K562 (cell line): ENCODE measurements at regions of chr15 and their contacts with region 1.

Region 1: DNA sequence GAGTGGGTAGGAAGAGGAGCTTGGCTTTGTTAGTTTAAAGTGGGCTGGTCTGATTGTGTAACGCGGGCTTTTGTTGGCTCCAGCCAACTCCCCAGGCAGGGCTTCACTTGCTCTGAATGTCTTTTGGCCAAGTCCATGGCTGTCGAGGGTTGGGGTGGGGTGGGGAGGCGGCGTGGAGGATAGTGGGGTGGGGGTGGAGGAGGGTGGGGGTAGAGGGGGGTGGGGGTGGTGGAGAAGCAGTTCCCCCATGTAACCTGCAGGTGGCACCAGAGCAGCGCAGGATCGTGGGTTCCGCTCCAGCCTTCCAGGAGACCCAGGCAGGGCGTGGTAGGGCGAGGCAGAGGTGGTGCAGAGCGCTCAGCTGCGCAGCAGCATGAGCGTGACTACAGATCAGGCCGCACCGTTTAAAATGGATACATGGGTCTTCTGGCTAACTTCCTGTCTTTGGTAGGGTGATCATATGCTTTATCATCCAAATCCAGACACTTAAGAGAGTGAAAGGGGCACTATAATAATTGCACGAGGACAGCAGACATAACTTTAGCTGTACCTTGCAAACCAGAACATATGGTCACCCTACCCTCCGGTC is 28.3 kb downstream of the GOLGA6A start:
- DNase-seq: peak; percentile 82 to 92 (median 90)
- ATAC-seq: peak; percentile 98
- H3K4me3 ChIP-seq: no peak overlapping the region
- H3K27ac ChIP-seq: no peak overlapping the region
- H3K4me1 ChIP-seq: peaks cover 0 to 3% of the 10 kb centered on the region in 2 experiments; a peak in 2 of 5 replicates
- H3K27me3 ChIP-seq: peaks cover 0 to 5% of the 10 kb centered on the region in 2 experiments; a peak in 1 of 5 replicates
- CTCF ChIP-seq: peak; percentile 52 to 74 (median 68)
- EP300 ChIP-seq: no peak
- POLR2A ChIP-seq: no peak
- RAD21 ChIP-seq: peak in 1 of 2 experiments; percentile 57; a peak in 2 of 4 replicates

Region 2: DNA sequence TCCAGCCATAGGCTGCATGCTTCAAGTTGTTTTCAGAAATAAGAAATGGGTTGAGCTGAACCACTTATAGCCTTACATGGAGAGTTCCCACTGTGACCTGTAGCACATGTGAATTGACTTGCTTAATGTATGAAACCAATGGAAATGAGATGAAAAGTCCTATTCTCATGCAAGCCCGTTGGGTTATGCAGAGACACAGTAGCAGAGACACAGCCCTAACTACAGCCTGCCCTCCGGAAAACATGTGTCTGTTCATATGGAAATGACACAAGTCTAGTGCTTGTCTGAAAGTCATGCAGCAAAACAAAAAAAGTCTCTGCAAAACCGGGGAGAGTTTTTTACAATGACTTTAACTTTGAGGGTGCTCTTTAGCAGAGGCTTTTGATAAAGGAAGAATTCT is 1382.5 kb before region 1 on chr15:
- CTCF ChIA-PET with region 1: no interaction called
- POLR2A ChIA-PET with region 1: no interaction called
- in situ Hi-C with region 1: loop called (anchors 25 kb)
- intact Hi-C with region 1: no loop called
- DNase-seq: no peak
- ATAC-seq: no peak; the same call in 2 of the 3 replicates
- H3K4me3 ChIP-seq: no peak overlapping the region
- H3K27ac ChIP-seq: no peak overlapping the region
- H3K4me1 ChIP-seq: peaks cover 0 to 3% of the 10 kb centered on the region in 2 experiments; a peak in 2 of 5 replicates
- H3K27me3 ChIP-seq: peaks cover 14 to 16% of the 10 kb centered on the region in 2 experiments; a peak in 3 of 5 replicates
- CTCF ChIP-seq: no peak
- EP300 ChIP-seq: no peak
- POLR2A ChIP-seq: no peak
- RAD21 ChIP-seq: no peak

Region 3: DNA sequence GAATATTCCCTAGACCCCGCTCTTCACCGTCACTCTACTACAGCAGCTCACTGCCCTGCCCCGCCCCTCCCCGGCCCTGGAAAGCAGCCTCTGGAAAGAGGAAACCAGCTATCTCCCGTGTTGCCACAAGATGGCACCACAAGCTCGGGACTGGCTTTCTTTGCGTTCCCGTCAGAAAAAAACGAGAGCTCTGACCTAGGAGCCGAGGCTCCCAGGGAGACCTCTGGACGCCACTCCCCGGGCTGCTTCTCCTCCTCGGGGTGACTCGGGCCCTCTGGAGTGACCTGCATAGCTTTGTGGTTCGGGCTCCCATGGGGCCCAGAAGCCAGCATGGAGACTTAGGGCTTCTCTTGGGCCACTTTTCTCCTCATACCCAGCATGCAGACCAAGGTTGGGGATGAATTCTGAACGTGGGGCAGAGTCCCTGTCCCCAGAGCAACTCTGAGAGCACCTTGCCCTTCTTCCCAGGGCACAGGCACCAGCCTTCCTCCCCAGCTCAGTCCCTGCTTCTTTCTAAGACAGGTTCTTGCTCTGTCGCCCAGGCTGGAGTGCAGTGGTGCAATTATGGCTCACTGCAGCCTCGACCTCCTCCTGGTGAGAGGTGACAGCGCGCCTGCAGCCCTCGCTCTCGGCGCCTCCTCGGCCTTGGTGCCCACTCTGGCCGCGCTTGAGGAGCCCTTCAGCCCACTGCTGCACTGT is 80.9 kb before region 1 on chr15:
- CTCF ChIA-PET with region 1: no interaction called
- POLR2A ChIA-PET with region 1: interaction called, 3 read pairs
- in situ Hi-C with region 1: no loop called
- intact Hi-C with region 1: loop called (anchors 5 kb)
- DNase-seq: peak; percentile 80 to 89 (median 82)
- ATAC-seq: peak; percentile 99
- H3K4me3 ChIP-seq: no peak overlapping the region
- H3K27ac ChIP-seq: no peak overlapping the region
- H3K4me1 ChIP-seq: peaks cover 0 to 12% of the 10 kb centered on the region in 2 experiments; a peak in 2 of 5 replicates
- H3K27me3 ChIP-seq: peaks cover 0 to 23% of the 10 kb centered on the region in 2 experiments; a peak in 3 of 5 replicates
- CTCF ChIP-seq: peak; percentile 89 to 98 (median 94)
- EP300 ChIP-seq: no peak
- POLR2A ChIP-seq: no peak
- RAD21 ChIP-seq: peak; percentile 89 to 93

Region 4: DNA sequence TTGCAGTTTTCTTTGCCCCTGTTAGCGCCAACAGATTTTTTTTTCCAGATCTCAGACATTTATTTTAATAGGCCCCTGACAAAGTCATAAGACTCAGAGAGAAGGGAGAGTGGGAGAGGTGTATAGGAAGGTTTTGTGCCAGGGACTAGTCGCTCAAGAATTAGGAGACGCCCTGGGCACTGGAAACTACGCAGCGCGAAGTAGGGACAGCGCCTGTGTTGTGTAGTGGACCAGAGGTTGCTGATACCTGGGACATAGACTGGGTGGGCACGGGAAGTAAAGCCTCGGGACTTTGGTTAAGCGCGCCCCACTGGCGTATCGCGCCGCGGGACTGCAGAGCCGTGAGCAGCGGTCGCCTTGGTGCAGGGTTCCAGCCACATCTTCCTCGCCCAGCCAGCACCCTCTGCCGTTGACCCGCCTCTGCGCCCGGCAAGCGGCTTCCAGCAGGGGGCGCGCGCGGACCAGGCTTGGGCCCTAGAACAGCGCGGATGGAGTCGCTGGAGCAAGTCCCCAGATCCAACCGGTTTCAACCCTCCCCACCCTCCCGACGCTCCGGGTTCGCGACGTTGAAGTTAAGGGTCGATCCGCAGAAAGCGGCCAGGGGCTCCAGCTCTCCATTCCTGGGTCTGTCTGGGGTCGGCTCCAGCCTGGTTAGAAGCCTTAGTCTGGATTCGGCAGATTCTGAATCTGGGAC is 73.4 kb after region 1 on chr15:
- CTCF ChIA-PET with region 1: no interaction called
- POLR2A ChIA-PET with region 1: no interaction called
- in situ Hi-C with region 1: loop called (anchors 10 kb)
- intact Hi-C with region 1: no loop called
- DNase-seq: peak; percentile 82 to 91 (median 87)
- ATAC-seq: peak; percentile 99
- H3K4me3 ChIP-seq: no peak overlapping the region
- H3K27ac ChIP-seq: no peak overlapping the region
- H3K4me1 ChIP-seq: peaks cover 0 to 28% of the 10 kb centered on the region in 2 experiments; a peak in 2 of 5 replicates
- H3K27me3 ChIP-seq: peaks cover 40 to 66% of the 10 kb centered on the region in 2 experiments
- CTCF ChIP-seq: peak; percentile 91 to 99 (median 99)
- EP300 ChIP-seq: no peak
- POLR2A ChIP-seq: no peak
- RAD21 ChIP-seq: peak; percentile 90 to 97